Activated B cell treated with CpG ODN at 0.5 μM for 24 hours (primary cell): ENCODE measurements at regions of chr2 and their contacts with region 1.

Region 1: DNA sequence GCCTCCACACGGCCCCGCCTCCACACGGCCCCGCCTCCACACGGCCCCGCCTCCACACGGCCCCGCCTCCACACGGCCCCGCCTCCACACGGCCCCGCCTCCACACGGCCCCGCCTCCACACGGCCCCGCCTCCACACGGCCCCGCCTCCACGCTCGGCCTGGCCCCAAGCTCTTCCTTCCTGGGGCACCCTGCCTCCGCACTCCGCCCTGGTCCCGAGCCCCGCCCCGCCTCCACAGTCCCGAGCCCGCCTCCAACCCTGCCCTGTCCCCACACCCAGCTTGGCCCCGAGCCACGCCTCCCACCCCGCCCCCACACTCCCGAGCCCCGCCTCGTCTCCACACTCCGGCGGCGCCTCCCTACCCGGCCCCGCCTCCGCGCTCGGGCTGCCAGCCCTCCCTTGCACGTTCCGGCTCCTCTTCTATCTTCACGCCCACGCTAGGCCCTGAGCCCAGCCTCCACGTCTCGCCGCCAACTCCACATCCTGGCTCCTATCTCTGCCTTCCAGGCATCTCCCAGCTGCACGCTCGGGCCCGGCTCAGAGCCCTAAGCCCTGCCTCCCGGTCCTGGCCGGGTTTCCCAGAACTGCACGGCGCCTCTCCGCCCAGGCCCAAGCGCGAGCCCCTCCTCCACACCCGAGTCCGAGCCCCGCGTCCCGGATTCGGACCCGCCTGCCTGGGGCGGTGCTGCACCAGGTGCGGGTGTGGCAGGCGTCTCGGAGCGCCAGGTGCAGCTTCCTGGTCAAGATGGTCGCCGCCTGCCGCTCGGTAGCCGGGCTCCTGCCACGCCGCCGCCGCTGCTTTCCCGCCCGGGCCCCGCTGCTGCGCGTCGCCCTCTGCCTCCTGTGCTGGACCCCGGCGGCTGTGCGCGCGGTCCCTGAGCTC is at the start of gene TMEM87B:
- DNase-seq: peak; percentile 87
- ATAC-seq: peak; percentile 72
- H3K4me3 Mint-ChIP-seq: peak within 1 kb of the TSS; percentile 96
- H3K27ac Mint-ChIP-seq: peak within 1 kb of the TSS; percentile 97
- H3K4me1 Mint-ChIP-seq: peaks cover 39% of the 10 kb centered on the region
- H3K27me3 Mint-ChIP-seq: no peaks in the 10 kb centered on the region
- CTCF ChIP-seq: no peak
- total RNA-seq, gene TMEM87B: 19.8 and 20.0 TPM in 2 replicates

Region 2: DNA sequence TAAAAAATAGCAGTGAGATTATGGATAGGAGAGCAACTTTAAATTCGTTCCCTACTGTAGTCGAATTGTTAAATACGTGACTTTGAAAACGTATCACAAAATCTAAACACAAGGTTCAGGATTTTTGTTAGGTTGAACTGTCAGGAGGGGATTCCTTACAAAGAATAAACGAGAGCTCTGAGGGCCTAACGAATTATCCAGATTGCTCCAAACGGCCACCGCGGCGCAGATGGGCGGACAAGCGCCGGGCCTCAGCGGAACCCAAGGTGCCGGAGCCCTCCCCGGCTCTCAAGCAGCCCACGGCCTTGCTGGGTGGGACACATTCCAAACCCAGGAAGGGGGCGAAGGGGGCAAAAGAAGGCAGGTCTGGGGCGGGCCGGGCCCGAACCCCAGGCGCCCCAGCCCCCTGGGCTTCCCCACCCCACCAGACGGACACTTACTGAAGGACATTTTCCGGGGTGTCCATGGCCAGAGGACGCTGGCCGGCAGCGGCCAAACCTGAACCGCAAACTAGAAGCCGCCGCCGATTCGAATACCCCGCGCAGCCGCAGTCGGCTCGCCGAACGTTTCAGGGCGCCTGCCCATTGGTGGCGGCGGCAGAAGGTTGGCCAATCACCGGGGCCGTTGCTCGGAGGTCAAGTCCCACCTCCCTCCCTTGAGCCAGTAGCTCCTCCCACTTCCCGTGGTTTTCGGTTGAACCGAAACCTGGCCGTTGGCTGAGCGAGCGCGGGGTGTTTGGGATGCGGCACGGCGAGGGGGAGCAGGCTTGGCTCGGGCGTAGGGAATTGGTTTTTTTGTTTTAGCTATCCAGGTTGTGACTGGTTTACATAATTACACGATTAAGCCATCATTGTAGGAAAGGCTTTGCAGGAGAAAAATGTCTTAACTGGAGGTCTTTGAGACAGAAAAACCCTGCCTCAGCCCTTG is 1377.3 kb before region 1 on chr2 and contains the start of gene BUB1:
- CTCF ChIA-PET with region 1: no interaction called
- POLR2A ChIA-PET with region 1: no interaction called
- intact Hi-C with region 1: loop called (anchors 5 kb)
- DNase-seq: peak; percentile 89
- ATAC-seq: peak; percentile 92
- H3K4me3 Mint-ChIP-seq: peak within 1 kb of the TSS; percentile 96
- H3K27ac Mint-ChIP-seq: peak within 1 kb of the TSS; percentile 97
- H3K4me1 Mint-ChIP-seq: peaks cover 34% of the 10 kb centered on the region
- H3K27me3 Mint-ChIP-seq: no peaks in the 10 kb centered on the region
- CTCF ChIP-seq: no peak
- total RNA-seq, gene BUB1: 5.9 and 6.2 TPM in 2 replicates

Region 3: DNA sequence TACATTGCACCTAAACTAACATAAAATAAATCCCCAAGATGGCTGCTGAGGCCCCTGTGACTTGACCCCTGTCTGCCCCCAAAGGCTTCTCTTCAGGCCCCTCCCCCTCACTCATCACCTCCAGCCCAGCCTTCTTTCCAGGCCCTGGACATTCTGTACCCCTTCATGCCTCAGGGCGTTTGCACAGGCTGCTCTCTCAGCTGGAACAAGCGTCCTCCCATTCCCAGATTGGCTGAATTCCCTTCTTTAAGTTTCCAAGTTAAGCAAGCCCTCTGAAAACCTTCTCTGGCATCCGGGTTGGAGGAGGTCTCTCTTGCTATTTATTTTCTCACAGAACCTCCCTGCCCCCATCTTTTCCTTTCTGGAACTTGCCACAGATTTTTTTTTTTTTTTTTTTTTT is 1099.5 kb before region 1 on chr2:
- CTCF ChIA-PET with region 1: no interaction called
- POLR2A ChIA-PET with region 1: no interaction called
- intact Hi-C with region 1: no loop called
- DNase-seq: no peak
- ATAC-seq: no peak
- H3K4me3 Mint-ChIP-seq: no peak overlapping the region
- H3K27ac Mint-ChIP-seq: no peak overlapping the region
- H3K4me1 Mint-ChIP-seq: no peaks in the 10 kb centered on the region
- H3K27me3 Mint-ChIP-seq: peaks cover 23% of the 10 kb centered on the region
- CTCF ChIP-seq: no peak

Region 4: DNA sequence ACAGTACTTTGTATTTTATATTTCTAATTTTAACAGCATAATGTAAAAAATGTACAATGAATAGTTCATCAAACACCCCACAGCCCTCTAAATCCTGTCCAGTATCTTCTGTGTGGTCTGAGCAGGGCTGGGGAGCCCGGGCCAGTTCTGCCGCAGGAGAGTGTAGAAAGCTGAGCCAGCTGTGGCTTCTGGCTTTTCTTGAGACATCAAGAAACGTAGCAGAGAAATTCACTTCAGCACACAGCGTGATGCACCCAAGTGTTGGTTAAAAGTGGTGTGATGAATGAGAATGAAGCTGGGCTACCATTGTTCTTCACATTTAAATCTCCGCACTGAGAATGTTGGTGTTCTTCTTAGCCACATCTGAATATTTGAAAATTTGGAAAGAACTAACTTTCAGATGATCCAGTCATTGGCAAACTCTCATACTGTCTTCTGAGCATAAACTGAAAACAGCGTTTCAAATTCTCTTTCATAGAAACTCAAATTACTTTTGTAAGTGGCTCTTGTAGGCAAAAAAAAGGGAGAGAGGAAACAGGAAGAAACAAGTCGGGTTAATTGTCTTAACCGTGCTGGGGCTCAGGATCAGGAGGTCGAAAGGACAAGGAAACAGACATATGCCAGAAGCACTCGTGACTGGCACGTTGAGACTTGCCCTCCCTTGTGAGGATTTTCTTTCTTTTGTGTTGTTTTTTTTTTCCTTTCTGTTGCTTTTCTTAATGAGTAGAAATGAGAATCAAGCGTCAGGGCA is 23.4 kb before region 1 on chr2:
- CTCF ChIA-PET with region 1: no interaction called
- POLR2A ChIA-PET with region 1: no interaction called
- intact Hi-C with region 1: no loop called
- DNase-seq: no peak
- ATAC-seq: no peak
- H3K4me3 Mint-ChIP-seq: no peak overlapping the region
- H3K27ac Mint-ChIP-seq: no peak overlapping the region
- H3K4me1 Mint-ChIP-seq: no peaks in the 10 kb centered on the region
- H3K27me3 Mint-ChIP-seq: peaks cover 5% of the 10 kb centered on the region
- CTCF ChIP-seq: no peak

Region 5: DNA sequence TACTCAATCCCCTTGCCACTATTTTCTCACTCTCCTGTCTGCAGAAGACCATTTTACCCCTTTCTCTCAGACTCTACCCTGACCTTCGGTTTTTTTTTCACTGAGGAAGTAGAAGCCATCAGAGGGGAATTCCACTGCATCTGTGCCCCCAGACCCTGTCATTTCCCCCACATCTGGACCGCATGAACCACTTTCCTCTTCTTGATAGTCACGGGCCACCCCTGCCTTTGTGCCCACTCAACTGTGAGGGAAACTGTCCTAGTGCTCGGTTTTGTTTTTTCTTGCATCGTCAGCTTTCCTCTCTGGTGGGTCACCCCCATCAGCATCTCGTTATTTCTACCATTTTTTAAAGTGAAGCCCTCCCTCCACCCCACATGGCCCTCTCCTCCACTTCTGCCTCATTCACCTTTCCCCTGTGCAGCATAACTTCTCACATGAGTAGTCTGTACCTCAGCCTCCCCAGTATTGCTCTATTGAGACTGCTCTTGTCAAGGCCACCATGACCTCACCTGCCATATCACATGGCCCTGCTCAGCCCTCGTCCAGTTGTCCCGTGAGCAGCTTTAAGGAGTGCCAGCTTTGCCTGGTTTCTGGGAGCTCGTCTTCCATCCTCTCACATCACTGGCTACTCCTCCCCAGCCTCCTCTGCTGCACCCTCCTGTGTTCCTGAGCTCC is 32.4 kb after region 1 on chr2:
- CTCF ChIA-PET with region 1: no interaction called
- POLR2A ChIA-PET with region 1: interaction called, 21 read pairs
- intact Hi-C with region 1: loop called (anchors 1 kb)
- DNase-seq: peak; percentile 36
- ATAC-seq: peak; percentile 96
- H3K4me3 Mint-ChIP-seq: peak overlapping the region; percentile 69
- H3K27ac Mint-ChIP-seq: peak overlapping the region; percentile 94
- H3K4me1 Mint-ChIP-seq: peaks cover 30% of the 10 kb centered on the region
- H3K27me3 Mint-ChIP-seq: no peaks in the 10 kb centered on the region
- CTCF ChIP-seq: no peak

Region 6: DNA sequence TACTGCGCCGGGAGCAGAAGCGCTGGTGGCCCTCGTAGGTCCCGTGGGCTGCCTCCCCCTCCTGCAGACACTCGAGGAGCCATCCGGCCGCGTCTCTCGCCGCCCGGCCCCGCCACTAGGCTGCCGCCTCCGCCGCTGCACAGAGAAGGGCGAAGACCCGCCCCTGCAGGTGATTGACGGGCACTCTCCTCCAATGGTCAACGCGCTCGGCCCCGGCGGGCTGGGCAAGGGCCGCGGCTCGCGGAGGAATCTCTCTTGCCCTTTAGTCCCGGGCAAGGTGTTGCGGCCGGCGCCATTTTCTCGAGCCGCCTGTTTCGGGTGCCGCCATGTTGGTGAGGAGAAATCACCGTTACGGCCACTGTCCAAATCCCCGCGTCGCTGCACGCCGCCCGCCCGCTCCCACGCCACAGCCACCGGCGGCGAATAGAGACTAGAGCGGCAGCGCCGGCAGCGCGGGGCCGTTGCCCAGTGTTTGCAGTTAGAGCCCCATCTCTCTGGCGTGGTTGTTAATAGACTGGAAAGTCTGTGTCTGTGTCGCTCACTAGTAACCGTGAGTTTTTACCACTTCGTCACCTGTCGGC is 220.3 kb after region 1 on chr2 and contains the start of gene ZC3H6:
- CTCF ChIA-PET with region 1: no interaction called
- POLR2A ChIA-PET with region 1: interaction called, 5 read pairs
- intact Hi-C with region 1: loop called (anchors 1 kb)
- DNase-seq: peak; percentile 100
- ATAC-seq: peak; percentile 88
- H3K4me3 Mint-ChIP-seq: peak within 1 kb of the TSS; percentile 95
- H3K27ac Mint-ChIP-seq: peak within 1 kb of the TSS; percentile 99
- H3K4me1 Mint-ChIP-seq: peaks cover 17% of the 10 kb centered on the region
- H3K27me3 Mint-ChIP-seq: no peaks in the 10 kb centered on the region
- CTCF ChIP-seq: no peak
- total RNA-seq, gene ZC3H6: 7.0 and 7.3 TPM in 2 replicates

Region 7: DNA sequence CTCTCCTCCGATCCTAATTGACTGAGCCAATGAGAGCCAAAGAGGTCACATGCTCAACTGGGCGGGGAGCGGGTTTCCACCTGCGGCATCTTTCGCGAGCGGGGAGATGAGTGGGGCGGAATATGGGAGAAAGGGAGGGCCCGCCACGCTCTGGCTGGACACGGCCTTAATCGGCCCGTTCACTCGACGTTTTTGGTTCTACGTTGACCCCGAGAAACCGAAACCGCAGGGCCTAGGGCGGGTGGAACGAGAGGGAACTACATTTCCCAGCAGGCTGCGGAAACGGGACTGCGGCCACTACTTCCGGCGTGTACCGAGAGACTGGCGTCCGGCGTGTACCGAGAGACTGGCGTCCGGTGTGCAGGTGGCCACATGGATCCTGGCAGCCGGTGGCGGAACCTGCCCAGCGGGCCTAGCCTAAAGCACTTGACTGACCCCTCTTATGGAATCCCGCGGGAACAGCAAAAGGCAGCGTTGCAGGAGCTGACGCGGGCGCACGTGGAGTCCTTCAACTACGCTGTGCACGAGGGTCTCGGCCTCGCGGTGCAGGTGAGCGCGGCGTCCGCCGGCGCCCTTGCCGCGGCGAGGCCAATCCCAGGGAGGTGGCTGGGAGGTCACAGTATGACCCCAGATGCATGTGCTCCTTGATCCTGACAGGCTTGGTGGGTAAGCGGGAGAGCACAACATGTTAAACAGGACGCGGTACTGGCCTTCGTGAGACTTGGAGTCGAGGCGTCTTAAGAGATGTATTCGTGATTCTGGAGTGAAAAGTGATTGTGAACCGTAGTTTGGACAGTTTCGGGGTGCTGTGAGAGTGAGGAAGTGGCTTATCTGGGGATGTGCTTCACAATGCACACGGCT is 487.3 kb after region 1 on chr2 and contains the start of gene POLR1B:
- CTCF ChIA-PET with region 1: no interaction called
- POLR2A ChIA-PET with region 1: interaction called, 3 read pairs
- intact Hi-C with region 1: loop called (anchors 1 kb)
- DNase-seq: peak; percentile 72
- ATAC-seq: peak; percentile 77
- H3K4me3 Mint-ChIP-seq: no peak within 1 kb of the TSS
- H3K27ac Mint-ChIP-seq: no peak within 1 kb of the TSS
- H3K4me1 Mint-ChIP-seq: peaks cover 19% of the 10 kb centered on the region
- H3K27me3 Mint-ChIP-seq: no peaks in the 10 kb centered on the region
- CTCF ChIP-seq: no peak
- total RNA-seq, gene POLR1B: 43.1 and 48.8 TPM in 2 replicates

Region 8: GRCh38 chr2:112706170-112706664 is 651.1 kb after region 1 on chr2:
- CTCF ChIA-PET with region 1: no interaction called
- POLR2A ChIA-PET with region 1: no interaction called
- intact Hi-C with region 1: loop called (anchors 5 kb)
- DNase-seq: no peak
- ATAC-seq: peak; percentile 56
- H3K4me3 Mint-ChIP-seq: peak overlapping the region; percentile 58
- H3K27ac Mint-ChIP-seq: peak overlapping the region; percentile 85
- H3K4me1 Mint-ChIP-seq: peaks cover 85% of the 10 kb centered on the region
- H3K27me3 Mint-ChIP-seq: no peaks in the 10 kb centered on the region
- CTCF ChIP-seq: no peak